Mammary epithelial cell (primary cell): ENCODE measurements at regions of chr13 and their contacts with region 1.

Region 1: GRCh38 chr13:31044377-31045285 is 112.2 kb downstream of the TEX26 start:
- DNase-seq: peak; percentile 72
- H3K4me3 ChIP-seq: no peak overlapping the region
- H3K27ac ChIP-seq: peak overlapping the region; percentile 74
- H3K4me1 ChIP-seq: peaks cover 32% of the 10 kb centered on the region
- H3K27me3 ChIP-seq: no peaks in the 10 kb centered on the region
- CTCF ChIP-seq: peak; percentile 97 to 98

Region 2: GRCh38 chr13:30132623-30133553 is 911.7 kb before region 1 on chr13:
- CTCF ChIA-PET with region 1: no interaction called
- dilution Hi-C with region 1: no loop called
- in situ Hi-C with region 1: loop called in 1 of 2 experiments (anchors 25 kb)
- intact Hi-C with region 1: loop called (anchors 5 kb)
- DNase-seq: peak; percentile 74
- H3K4me3 ChIP-seq: no peak overlapping the region
- H3K27ac ChIP-seq: no peak overlapping the region
- H3K4me1 ChIP-seq: peaks cover 3% of the 10 kb centered on the region
- H3K27me3 ChIP-seq: no peaks in the 10 kb centered on the region
- CTCF ChIP-seq: peak; percentile 63 to 89

Region 3: GRCh38 chr13:30520571-30520970 is 524.1 kb before region 1 on chr13:
- CTCF ChIA-PET with region 1: no interaction called
- dilution Hi-C with region 1: no loop called
- in situ Hi-C with region 1: no loop called
- intact Hi-C with region 1: no loop called
- DNase-seq: peak; percentile 44
- H3K4me3 ChIP-seq: no peak overlapping the region
- H3K27ac ChIP-seq: no peak overlapping the region
- H3K4me1 ChIP-seq: no peaks in the 10 kb centered on the region
- H3K27me3 ChIP-seq: no peaks in the 10 kb centered on the region
- CTCF ChIP-seq: no peak

Region 4: DNA sequence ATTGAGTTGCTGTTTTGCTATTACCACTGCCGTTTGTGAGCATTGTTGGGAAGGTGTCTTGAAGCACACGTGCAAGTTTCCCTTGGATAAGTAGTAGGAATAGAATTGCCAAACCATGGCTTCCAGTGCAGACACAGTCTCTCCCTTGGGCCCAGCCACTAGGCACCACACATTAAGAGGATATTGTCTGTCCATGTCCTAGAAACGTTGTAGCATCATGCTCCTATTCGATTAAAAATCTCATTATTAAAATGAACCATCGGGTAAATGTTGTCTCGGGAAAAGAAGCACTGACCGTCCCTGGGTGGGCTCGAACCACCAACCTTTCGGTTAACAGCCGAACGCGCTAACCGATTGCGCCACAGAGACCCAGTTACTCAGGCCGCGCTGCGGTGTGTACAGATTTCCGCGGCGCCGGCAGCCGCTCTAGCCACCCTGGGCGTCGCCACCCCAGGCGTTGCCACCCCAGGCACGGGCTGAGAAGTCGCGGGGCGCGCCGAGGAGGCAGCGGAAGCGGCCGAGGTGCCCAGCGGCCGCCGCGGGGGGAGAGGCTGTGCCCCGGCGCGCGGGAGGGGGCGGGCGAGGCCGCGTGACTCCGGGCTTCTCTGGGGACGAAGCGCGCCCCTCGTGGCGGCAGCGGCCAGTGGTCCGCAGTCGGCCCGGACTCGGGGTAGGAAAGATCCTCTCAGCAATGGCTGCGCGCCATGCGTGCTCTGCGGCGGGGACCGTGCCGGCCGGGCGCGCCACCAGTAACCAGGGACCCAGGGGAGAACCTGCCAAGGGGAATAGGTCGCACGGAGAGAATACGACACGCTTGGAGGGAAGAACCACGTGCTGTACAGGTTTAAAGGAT is 370.7 kb before region 1 on chr13:
- CTCF ChIA-PET with region 1: no interaction called
- dilution Hi-C with region 1: no loop called
- in situ Hi-C with region 1: loop called in 1 of 2 experiments (anchors 25 kb)
- intact Hi-C with region 1: loop called (anchors 2 kb)
- DNase-seq: peak; percentile 81
- H3K4me3 ChIP-seq: peak overlapping the region; percentile 23 to 56 (median 52)
- H3K27ac ChIP-seq: no peak overlapping the region
- H3K4me1 ChIP-seq: peaks cover 9% of the 10 kb centered on the region
- H3K27me3 ChIP-seq: no peaks in the 10 kb centered on the region
- CTCF ChIP-seq: peak; percentile 37 to 49

Region 5: GRCh38 chr13:30808589-30808988 is 236.0 kb before region 1 on chr13:
- CTCF ChIA-PET with region 1: no interaction called
- dilution Hi-C with region 1: no loop called
- in situ Hi-C with region 1: loop called in 1 of 2 experiments (anchors 10 kb)
- intact Hi-C with region 1: loop called (anchors 1 kb)
- DNase-seq: no peak
- H3K4me3 ChIP-seq: no peak overlapping the region
- H3K27ac ChIP-seq: no peak overlapping the region
- H3K4me1 ChIP-seq: peaks cover 51% of the 10 kb centered on the region
- H3K27me3 ChIP-seq: no peaks in the 10 kb centered on the region
- CTCF ChIP-seq: peak in 1 of 2 donors; percentile 41

Region 6: GRCh38 chr13:31096654-31097302 is 52.1 kb after region 1 on chr13:
- CTCF ChIA-PET with region 1: no interaction called
- dilution Hi-C with region 1: no loop called
- in situ Hi-C with region 1: no loop called
- intact Hi-C with region 1: loop called (anchors 2 kb)
- DNase-seq: peak; percentile 68
- H3K4me3 ChIP-seq: no peak overlapping the region
- H3K27ac ChIP-seq: no peak overlapping the region
- H3K4me1 ChIP-seq: peaks cover 38% of the 10 kb centered on the region
- H3K27me3 ChIP-seq: no peaks in the 10 kb centered on the region
- CTCF ChIP-seq: no peak

Region 7: GRCh38 chr13:31199849-31200636 is 155.4 kb after region 1 on chr13 and contains the start of gene B3GLCT:
- CTCF ChIA-PET with region 1: no interaction called
- dilution Hi-C with region 1: no loop called
- in situ Hi-C with region 1: no loop called
- intact Hi-C with region 1: loop called (anchors 1 kb)
- DNase-seq: peak; percentile 78
- H3K4me3 ChIP-seq: peak within 1 kb of the TSS; percentile 63 to 80 (median 74)
- H3K27ac ChIP-seq: peak within 1 kb of the TSS; percentile 75
- H3K4me1 ChIP-seq: peaks cover 29% of the 10 kb centered on the region
- H3K27me3 ChIP-seq: no peaks in the 10 kb centered on the region
- CTCF ChIP-seq: peak; percentile 71 to 72
- total RNA-seq, gene B3GLCT: 5.9 to 9.3 TPM

Region 8: DNA sequence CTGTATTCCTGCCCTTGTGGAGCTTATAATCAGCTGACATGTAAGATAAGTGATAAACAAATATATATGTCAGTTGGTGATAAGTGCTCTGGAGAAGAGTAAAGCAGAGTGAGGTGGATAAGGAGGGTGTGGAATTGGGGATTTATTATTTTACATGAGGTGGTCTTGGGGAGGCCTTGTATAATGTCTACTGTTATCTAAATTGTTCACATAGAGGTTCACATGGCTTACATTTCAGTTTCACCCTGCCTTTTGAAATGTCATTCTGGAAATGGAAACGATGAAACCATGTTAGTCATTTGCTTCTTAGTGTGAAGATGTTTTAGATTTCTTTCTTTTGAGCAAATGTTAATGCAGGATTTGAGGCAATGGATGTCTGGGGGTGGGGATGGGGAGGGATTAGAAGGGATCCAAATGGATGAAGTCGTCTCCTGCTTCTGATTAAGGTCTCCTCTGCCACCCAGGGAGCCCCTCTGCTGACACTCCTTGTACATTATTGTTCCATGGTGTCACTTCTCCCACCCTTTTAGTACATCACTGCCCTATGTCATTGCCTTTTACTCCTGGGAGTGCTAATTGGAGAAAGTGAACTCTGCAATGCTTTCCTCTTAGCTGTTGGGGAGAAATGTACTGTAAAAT is 169.1 kb after region 1 on chr13:
- CTCF ChIA-PET with region 1: no interaction called
- dilution Hi-C with region 1: no loop called
- in situ Hi-C with region 1: no loop called
- intact Hi-C with region 1: no loop called
- DNase-seq: no peak
- H3K4me3 ChIP-seq: no peak overlapping the region
- H3K27ac ChIP-seq: no peak overlapping the region
- H3K4me1 ChIP-seq: no peaks in the 10 kb centered on the region
- H3K27me3 ChIP-seq: no peaks in the 10 kb centered on the region
- CTCF ChIP-seq: no peak